ENCODE measurements at regions of chr9 and their contacts with region 1.

Region 1: GRCh38 chr9:129932303-129933151 is 97.3 kb downstream of the USP20 start:
- DNase-seq: no peak
- ATAC-seq: peak; percentile 54
- H3K4me3 ChIP-seq: peak overlapping the region; percentile 24
- H3K4me3 Mint-ChIP-seq: peak overlapping the region; percentile 36 to 79 (median 68)
- H3K27ac ChIP-seq: peak overlapping the region; percentile 31
- H3K27ac Mint-ChIP-seq: peak overlapping the region; percentile 60 to 95 (median 85)
- H3K4me1 ChIP-seq: peaks cover 20 to 35% of the 10 kb centered on the region in 2 donors
- H3K4me1 Mint-ChIP-seq: peaks cover 31 to 61% (median 56%) of the 10 kb centered on the region in 7 donors
- H3K27me3 ChIP-seq: no peaks in the 10 kb centered on the region
- H3K27me3 Mint-ChIP-seq: no peaks in the 10 kb centered on the region

Region 2: GRCh38 chr9:129641746-129642513 is 290.6 kb before region 1 on chr9 and contains the start of gene ASB6:
- CTCF ChIA-PET with region 1: no interaction called
- POLR2A ChIA-PET with region 1: no interaction called
- intact Hi-C with region 1: no loop called
- DNase-seq: peak; percentile 80 to 100 (median 87)
- ATAC-seq: peak; percentile 96
- H3K4me3 ChIP-seq: peak within 1 kb of the TSS; percentile 97
- H3K4me3 Mint-ChIP-seq: peak within 1 kb of the TSS; percentile 81 to 90 (median 86)
- H3K27ac ChIP-seq: peak within 1 kb of the TSS; percentile 80
- H3K27ac Mint-ChIP-seq: peak within 1 kb of the TSS; percentile 80 to 95 (median 89)
- H3K4me1 ChIP-seq: peaks cover 16 to 18% of the 10 kb centered on the region in 2 donors
- H3K4me1 Mint-ChIP-seq: peaks cover 19 to 31% (median 23%) of the 10 kb centered on the region in 7 donors
- H3K27me3 ChIP-seq: no peaks in the 10 kb centered on the region
- H3K27me3 Mint-ChIP-seq: no peaks in the 10 kb centered on the region
- total RNA-seq, gene ASB6: 25.0 to 33.2 (median 28.1) TPM

Region 3: DNA sequence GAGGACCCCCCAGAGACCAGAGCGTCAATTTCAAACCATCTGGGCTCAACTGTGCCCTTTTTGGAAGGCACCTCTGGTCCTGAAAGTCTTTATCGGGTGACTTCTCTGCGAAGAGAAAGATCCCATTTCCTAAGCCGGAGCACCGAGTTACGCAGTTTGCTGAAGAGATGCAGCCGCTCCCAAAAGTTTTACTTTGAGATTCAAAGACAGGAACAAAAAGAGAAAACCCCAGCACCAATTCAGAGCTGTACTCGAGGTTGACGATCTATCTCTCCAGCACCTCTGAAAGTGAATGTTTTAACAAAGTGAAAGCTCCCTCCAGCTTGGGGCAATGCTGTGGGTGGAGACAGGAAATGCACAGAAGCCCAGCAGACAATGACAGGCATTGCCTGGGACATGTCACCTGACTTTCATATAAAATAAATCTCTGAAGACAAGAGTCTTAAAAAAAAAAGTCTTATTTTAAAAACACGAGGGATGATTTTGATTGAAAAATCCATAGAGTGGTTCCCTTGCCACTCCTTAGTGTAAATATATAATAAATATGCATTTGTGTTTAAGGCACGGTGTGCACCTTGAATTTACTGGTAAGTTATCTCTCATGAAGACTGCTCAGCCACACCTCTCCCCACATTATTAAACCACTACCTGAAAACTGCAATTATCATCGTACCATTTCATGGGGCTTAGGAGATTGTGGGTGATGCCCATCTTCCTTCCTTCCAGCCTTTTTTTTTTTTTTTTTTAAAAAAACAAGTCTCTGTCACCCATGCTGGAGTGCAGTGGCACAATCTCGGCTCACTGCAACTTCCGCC is 30.6 kb after region 1 on chr9:
- CTCF ChIA-PET with region 1: no interaction called
- POLR2A ChIA-PET with region 1: interaction called, 4 read pairs
- intact Hi-C with region 1: loop called in 1 of 2 experiments (anchors 5 kb)
- DNase-seq: peak; percentile 23 to 92 (median 87)
- ATAC-seq: peak; percentile 98
- H3K4me3 ChIP-seq: peak overlapping the region; percentile 80
- H3K4me3 Mint-ChIP-seq: peak overlapping the region; percentile 66 to 95 (median 88)
- H3K27ac ChIP-seq: peak overlapping the region; percentile 92
- H3K27ac Mint-ChIP-seq: peak overlapping the region; percentile 89 to 99 (median 97)
- H3K4me1 ChIP-seq: peaks cover 34 to 47% of the 10 kb centered on the region in 2 donors
- H3K4me1 Mint-ChIP-seq: peaks cover 54 to 80% (median 67%) of the 10 kb centered on the region in 7 donors
- H3K27me3 ChIP-seq: no peaks in the 10 kb centered on the region
- H3K27me3 Mint-ChIP-seq: no peaks in the 10 kb centered on the region